Vagina (tissue), 2 donors: ENCODE measurements at regions of chrX and their contacts with region 1.

Region 1: DNA sequence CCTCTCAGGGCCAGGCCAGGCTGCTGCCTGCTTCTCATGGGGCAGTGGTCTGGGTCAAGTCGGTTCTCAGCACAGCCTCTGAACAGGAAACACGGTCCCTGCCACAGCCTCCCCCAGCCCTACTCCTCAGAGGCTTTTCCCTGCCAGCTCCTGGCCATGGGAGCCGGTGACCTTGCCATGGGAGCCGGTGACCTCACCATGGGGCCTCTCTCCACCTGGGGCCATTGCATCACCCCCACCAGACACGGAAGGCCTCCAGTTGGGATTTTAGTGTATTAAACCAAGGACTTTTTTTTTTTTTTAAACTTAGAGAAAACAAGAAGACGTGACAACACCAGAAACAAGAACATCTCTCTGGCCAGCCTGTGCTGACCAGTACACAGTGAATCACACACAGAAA is 25.6 kb downstream of the ETDB start:
- DNase-seq: no peak
- H3K4me3 ChIP-seq: no peak overlapping the region
- H3K27ac ChIP-seq: no peak overlapping the region
- H3K4me1 ChIP-seq: peaks cover 10% of the 10 kb centered on the region
- H3K27me3 ChIP-seq: no peaks in the 10 kb centered on the region
- CTCF ChIP-seq: no peak
- POLR2A ChIP-seq: no peak

Region 2: GRCh38 chrX:135411893-135412292 is 317.2 kb after region 1 on chrX:
- intact Hi-C with region 1: loop called (anchors 5 kb)
- DNase-seq: peak in 1 of 2 donors; percentile 11
- H3K4me3 ChIP-seq: no peak overlapping the region
- H3K27ac ChIP-seq: no peak overlapping the region
- H3K4me1 ChIP-seq: no peaks in the 10 kb centered on the region
- H3K27me3 ChIP-seq: no peaks in the 10 kb centered on the region
- CTCF ChIP-seq: no peak
- POLR2A ChIP-seq: no peak